Heart right ventricle (tissue), 16 donors: ENCODE measurements at regions of chrX and their contacts with region 1.

Region 1: GRCh38 chrX:1500701-1501624 is 36.0 kb downstream of the P2RY8 start:
- DNase-seq: no peak
- ATAC-seq: peak; percentile 16 to 72 (median 60)
- H3K4me3 ChIP-seq: peak overlapping the region in 6 of 10 donors; percentile 18 to 44 (median 29)
- H3K27ac ChIP-seq: peak overlapping the region; percentile 44 to 90 (median 78)
- H3K4me1 ChIP-seq: peaks cover 0 to 42% (median 21%) of the 10 kb centered on the region in 9 donors
- H3K27me3 ChIP-seq: no peaks in the 10 kb centered on the region
- CTCF ChIP-seq: no peak

Region 2: DNA sequence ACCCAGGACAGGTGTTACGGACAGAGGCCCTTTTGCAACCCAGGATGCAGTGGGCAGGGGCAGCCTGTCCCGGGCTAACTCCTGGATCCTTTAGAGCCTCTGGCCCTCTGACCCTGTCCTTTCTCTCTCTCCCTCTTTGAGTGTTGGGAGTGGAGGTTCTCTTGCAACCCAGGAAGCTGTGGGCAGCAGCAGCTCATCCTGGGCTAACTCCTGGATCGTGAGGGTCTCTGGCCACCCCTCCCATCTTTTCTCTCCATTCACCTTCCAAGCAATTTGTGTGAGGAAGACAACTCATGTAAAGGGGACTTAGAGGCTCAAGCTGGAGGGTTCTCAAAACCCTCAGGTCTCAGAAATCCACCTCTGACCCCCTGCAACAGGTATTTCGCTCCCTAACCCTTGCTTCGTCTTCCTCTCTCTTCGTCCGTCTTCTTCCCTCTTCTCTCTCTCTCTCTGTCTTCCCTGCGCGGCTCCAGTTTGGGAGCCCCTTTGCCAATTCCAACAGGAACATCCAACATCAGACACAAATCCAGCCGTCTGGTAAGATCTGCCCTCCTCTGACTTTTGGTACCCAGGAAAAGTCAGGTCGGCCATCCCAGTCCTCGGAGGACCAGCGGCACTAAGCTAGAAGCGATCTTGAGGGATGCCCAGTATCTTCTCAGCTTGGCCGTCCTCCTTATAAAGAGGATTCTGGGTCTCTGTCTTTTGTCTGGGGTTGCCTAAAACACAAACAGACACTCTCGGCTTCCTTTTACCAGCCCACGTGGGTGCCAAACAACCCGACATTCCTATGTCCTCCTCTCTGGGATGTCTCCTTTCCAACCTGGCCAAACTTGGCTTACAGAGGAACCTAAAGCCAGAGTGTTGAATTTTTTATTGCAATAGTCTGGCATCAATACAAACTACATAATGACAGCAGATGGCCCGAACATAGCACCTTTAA is 56.1 kb before region 1 on chrX:
- intact Hi-C with region 1: no loop called
- DNase-seq: no peak
- ATAC-seq: no peak
- H3K4me3 ChIP-seq: no peak overlapping the region
- H3K27ac ChIP-seq: no peak overlapping the region
- H3K4me1 ChIP-seq: no peaks in the 10 kb centered on the region
- H3K27me3 ChIP-seq: no peaks in the 10 kb centered on the region
- CTCF ChIP-seq: no peak

Region 3: GRCh38 chrX:1537035-1537715 is 36.2 kb after region 1 on chrX and contains the start of gene P2RY8:
- intact Hi-C with region 1: loop called in 1 of 10 experiments (anchors 5 kb)
- DNase-seq: peak; percentile 37 to 55
- ATAC-seq: peak; percentile 54 to 86 (median 79)
- H3K4me3 ChIP-seq: peak within 1 kb of the TSS in 9 of 10 donors; percentile 24 to 63 (median 53)
- H3K27ac ChIP-seq: peak within 1 kb of the TSS; percentile 9 to 89 (median 70)
- H3K4me1 ChIP-seq: peaks cover 0 to 10% (median 0%) of the 10 kb centered on the region in 9 donors
- H3K27me3 ChIP-seq: peaks cover 0 to 7% (median 0%) of the 10 kb centered on the region in 7 donors
- CTCF ChIP-seq: no peak
- total RNA-seq, gene P2RY8: 1.2 to 6.7 (median 4.1) TPM

Region 4: GRCh38 chrX:1903236-1903935 is 402.4 kb after region 1 on chrX:
- intact Hi-C with region 1: no loop called
- DNase-seq: no peak
- ATAC-seq: no peak
- H3K4me3 ChIP-seq: no peak overlapping the region
- H3K27ac ChIP-seq: no peak overlapping the region
- H3K4me1 ChIP-seq: no peaks in the 10 kb centered on the region
- H3K27me3 ChIP-seq: peaks cover 0 to 22% (median 2%) of the 10 kb centered on the region in 7 donors
- CTCF ChIP-seq: no peak